Gastrocnemius medialis (tissue), 4 donors: ENCODE measurements at regions of chrX and their contacts with region 1.

Region 1: DNA sequence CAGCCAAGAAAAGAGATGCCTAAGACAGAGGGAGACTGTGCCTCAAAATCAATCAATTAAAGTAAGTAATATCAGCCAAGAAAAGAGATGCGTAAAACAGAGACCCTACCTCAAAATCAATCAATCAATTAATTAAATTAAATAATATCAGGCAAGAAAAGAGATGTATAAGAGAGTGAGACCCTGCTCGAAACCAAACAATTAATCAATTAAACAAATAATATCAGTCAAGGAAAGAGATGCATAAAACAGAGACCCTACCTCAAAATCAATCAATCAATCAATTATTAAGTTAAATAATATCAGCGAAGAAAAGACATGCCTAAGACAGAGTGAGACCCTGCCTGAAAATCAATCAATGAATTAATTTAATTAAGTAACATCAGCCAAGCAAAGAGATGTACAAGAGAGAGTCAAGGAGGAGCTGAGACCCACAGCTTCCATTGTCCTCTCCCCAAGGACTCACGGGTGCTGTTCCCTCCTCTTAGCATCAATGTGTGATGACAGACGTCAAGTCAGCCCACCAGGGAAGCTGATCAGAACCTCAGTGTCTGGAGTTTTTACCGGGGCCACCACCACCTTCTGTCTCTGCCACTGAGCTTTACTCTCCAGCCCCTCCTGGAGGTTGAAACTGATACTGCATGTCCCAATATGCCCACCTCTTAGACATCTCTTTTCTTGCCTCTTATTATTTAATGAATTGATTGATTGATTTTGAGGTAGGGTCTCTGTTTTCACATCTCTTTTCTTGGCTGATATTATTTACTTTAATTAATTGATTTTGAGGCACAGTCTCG is 10.5 kb upstream of the AKAP17A start:
- DNase-seq: no peak
- ATAC-seq: no peak
- H3K4me3 ChIP-seq: no peak overlapping the region
- H3K27ac ChIP-seq: no peak overlapping the region
- H3K4me1 ChIP-seq: no peaks in the 10 kb centered on the region
- H3K27me3 ChIP-seq: no peaks in the 10 kb centered on the region
- CTCF ChIP-seq: peak; percentile 34 to 70 (median 61)
- POLR2A ChIP-seq: no peak

Region 2: GRCh38 chrX:1468250-1468772 is 112.6 kb before region 1 on chrX:
- in situ Hi-C with region 1: loop called in 3 of 4 experiments (anchors 10 to 25 kb)
- intact Hi-C with region 1: no loop called
- DNase-seq: no peak
- ATAC-seq: no peak
- H3K4me3 ChIP-seq: no peak overlapping the region
- H3K27ac ChIP-seq: no peak overlapping the region
- H3K4me1 ChIP-seq: no peaks in the 10 kb centered on the region
- H3K27me3 ChIP-seq: peaks cover 12 to 22% (median 16%) of the 10 kb centered on the region in 3 donors
- CTCF ChIP-seq: no peak
- POLR2A ChIP-seq: no peak

Region 3: DNA sequence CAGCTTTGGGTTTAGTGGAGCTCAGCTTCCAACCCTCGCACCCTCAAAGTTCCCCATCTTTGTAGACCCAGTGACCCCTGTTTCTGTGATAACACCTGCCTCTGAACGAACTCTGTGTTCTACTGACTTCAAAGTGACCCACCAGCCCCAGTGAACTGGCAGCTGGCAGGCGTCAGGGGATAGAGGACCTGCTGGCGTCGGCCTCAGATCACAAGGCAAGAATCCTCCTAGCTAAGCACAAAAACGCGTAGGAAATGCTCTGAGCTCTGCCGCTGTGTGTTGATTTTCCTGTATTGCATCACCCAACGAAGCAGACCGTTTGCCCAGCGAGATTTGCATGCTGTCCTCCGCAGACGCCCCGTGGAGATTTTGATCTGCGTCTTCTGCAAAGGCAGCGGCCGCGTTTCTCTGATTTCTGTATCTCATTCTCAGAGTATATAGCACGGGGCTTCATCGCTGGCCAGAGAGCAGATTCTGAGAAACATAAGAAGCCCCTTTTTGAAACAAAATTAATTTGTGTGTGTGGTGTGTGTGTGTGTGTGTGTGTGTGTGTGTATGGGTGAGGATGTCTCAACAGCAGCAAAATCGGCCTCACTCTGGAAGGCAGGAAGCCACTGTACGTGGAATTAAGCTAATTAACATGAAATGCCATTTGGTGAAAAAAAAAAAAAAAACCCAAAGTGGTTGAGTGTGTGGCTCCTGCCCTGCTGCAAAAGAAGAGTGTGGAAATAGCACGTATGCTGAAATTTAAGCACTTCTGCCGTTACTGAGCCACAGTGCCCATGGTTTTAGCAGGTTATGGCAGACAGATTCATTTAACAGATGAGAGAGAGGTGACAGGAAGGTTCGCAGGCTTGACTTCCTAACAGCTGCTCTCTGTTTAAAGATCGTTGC is 99.0 kb before region 1 on chrX:
- in situ Hi-C with region 1: no loop called
- intact Hi-C with region 1: no loop called
- DNase-seq: peak; percentile 31 to 53
- ATAC-seq: peak; percentile 75 to 77
- H3K4me3 ChIP-seq: no peak overlapping the region
- H3K27ac ChIP-seq: peak overlapping the region; percentile 48 to 70 (median 60)
- H3K4me1 ChIP-seq: no peaks in the 10 kb centered on the region
- H3K27me3 ChIP-seq: no peaks in the 10 kb centered on the region
- CTCF ChIP-seq: no peak
- POLR2A ChIP-seq: peak; percentile 6 to 27